ENCODE measurements at regions of chr13 and their contacts with region 1.

Region 1: DNA sequence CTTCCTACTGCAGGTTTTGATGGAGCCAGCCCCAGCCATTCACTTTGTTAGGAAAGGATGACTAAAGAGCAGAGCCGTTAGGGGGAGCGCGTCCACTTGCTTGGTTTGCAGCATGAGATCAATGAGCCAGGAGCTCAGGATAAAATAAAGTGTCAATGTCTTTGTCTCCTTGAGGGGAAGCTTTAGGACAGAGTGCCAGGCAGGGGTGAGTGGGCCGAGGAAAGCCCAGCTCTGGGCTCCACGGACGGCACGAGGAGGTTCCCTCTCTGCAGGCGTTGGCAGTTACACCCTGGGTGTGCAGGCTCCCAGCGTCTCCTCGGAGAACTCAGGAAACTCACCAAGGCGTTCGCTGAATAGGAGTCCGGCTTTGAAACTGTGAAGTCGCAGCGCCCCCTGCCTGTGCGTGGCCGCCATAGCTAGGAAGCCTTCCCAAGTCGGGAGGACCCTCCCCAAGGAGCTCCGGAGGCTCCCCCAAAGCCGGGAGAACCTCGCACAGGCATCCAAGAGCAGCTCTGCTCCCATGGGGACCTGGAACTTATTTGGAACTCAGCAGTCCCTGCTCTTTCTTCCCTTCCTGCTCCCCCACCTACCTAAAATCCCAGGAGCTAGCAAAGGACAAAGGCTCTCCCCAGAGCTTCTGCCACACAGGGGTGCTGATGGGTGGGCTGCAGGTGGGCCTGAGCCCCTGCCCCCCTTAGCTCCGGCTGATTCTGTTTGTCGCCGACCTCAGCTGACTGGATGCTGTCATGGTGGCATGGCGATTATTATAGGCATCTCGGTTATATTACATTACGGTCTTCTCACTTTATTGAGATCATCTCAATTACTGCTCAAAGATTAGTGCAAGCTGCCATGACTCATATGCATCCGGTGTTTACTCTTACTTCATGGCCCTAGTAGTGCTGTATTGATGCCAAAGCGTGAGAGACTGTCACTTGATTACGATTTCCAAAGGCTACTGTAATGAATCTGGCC is 34.4 kb downstream of the GSX1 start:
- DNase-seq: peak; percentile 78 to 99
- H3K4me3 ChIP-seq: peak overlapping the region in 3 of 4 experiments; percentile 31 to 52 (median 40); a peak in 4 of 8 replicates
- H3K27ac ChIP-seq: no peak overlapping the region
- H3K4me1 ChIP-seq: peaks cover 7 to 19% (median 11%) of the 10 kb centered on the region in 4 experiments; a peak in 6 of 7 replicates
- H3K27me3 ChIP-seq: peaks cover 47 to 91% (median 78%) of the 10 kb centered on the region in 4 experiments
- CTCF ChIP-seq: peak; percentile 77 to 96 (median 95)
- EP300 ChIP-seq: no peak
- POLR2A ChIP-seq: no peak
- RAD21 ChIP-seq: peak; percentile 94 to 96

Region 2: GRCh38 chr13:27379694-27380641 is 446.7 kb before region 1 on chr13:
- CTCF ChIA-PET with region 1: interaction called, 19 read pairs
- POLR2A ChIA-PET with region 1: no interaction called
- DNase-seq: peak; percentile 78 to 95
- H3K4me3 ChIP-seq: no peak overlapping the region; a peak in 1 of 8 replicates
- H3K27ac ChIP-seq: no peak overlapping the region
- H3K4me1 ChIP-seq: peaks cover 0 to 16% (median 10%) of the 10 kb centered on the region in 4 experiments; a peak in 6 of 7 replicates
- H3K27me3 ChIP-seq: no peaks in the 10 kb centered on the region
- CTCF ChIP-seq: peak; percentile 74 to 80 (median 79)
- EP300 ChIP-seq: no peak
- POLR2A ChIP-seq: no peak
- RAD21 ChIP-seq: peak; percentile 83 to 88

Region 3: DNA sequence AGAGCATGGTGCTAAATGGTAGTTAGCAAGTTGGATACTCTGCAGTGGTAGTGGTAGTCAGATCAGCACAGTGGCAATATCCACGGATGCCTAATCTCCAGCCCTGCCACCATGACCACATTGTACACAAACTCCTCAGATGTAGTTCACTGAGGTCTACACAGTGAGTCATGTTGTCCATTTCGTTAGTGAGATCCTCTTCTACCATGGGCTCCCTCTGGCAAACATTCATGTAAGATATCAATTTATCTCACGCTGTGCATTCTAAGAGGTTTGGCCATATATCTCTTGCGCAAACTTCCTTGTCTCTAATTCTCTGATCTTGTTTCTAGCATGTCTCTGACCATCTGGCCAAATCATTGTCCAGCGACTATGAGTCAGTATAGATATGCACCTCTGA is 146.8 kb before region 1 on chr13:
- CTCF ChIA-PET with region 1: interaction called, 10 read pairs
- POLR2A ChIA-PET with region 1: no interaction called
- DNase-seq: no peak
- H3K4me3 ChIP-seq: no peak overlapping the region
- H3K27ac ChIP-seq: no peak overlapping the region
- H3K4me1 ChIP-seq: no peaks in the 10 kb centered on the region
- H3K27me3 ChIP-seq: no peaks in the 10 kb centered on the region
- CTCF ChIP-seq: no peak
- EP300 ChIP-seq: no peak
- POLR2A ChIP-seq: no peak
- RAD21 ChIP-seq: no peak

Region 4: DNA sequence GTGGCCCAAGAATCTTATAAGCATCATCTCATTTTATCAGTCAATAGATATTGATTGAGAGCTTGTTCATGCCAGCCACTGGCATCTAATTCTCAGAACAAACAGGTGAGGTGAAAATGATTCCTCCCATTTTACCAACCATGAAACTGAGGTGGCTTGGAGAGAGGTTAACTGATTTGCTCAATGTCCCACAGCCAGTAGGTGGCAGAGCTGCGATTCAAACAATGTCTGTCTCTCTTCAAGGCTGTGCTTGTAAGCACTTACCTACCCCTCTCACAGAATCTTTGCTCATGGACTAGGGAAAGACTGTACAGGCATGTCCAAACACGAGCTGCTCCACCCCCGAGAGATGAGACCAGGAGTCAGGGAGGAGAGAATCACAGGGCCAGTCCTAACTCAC is 55.9 kb before region 1 on chr13:
- CTCF ChIA-PET with region 1: interaction called, 241 read pairs
- POLR2A ChIA-PET with region 1: interaction called, 3 read pairs
- DNase-seq: no peak
- H3K4me3 ChIP-seq: no peak overlapping the region
- H3K27ac ChIP-seq: no peak overlapping the region
- H3K4me1 ChIP-seq: no peaks in the 10 kb centered on the region
- H3K27me3 ChIP-seq: peaks cover 0 to 3% (median 0%) of the 10 kb centered on the region in 4 experiments; a peak in 3 of 7 replicates
- CTCF ChIP-seq: peak; percentile 35 to 89 (median 84)
- EP300 ChIP-seq: no peak
- POLR2A ChIP-seq: no peak
- RAD21 ChIP-seq: peak; percentile 79 to 83

Region 5: DNA sequence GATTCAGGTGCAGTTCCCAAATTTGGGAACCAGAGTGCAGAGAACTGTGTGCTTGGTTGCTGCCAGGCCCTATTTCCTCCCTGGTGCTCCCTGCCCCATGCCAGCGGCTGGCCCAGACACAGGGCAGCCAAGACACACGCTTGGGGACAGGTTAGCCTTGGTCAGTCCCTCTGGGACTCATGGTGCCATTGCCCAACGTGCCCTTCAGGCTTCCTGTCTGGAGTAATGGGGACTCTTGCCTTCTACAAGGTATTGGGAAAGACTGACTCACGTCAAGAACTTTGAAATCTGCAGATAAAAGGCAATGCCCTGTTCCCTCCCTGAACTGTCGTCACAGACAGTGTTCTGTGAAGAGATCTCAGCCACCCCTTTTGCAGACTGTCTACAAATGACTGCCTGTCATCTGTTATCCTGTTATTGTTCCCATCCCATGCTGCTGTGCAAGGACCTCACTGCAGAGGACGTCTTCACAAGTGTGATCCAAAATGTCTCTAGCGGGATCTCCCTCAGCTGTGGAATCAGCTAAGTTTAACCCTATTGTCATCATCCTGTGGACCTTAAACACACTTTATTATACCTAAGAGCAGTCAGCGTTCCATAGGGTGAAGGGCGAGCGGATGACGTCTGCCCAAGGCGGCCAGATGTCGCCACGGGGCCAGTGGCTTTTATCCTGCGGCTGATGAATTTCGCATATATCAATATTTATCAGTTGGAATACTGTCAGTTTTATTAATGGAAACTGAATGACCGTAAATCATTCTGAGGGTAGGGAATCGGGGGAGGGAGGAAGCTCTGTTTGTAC is 24.6 kb after region 1 on chr13:
- CTCF ChIA-PET with region 1: interaction called, 19 read pairs
- POLR2A ChIA-PET with region 1: no interaction called
- DNase-seq: no peak
- H3K4me3 ChIP-seq: no peak overlapping the region
- H3K27ac ChIP-seq: no peak overlapping the region
- H3K4me1 ChIP-seq: peaks cover 0 to 7% (median 3%) of the 10 kb centered on the region in 4 experiments; a peak in 4 of 7 replicates
- H3K27me3 ChIP-seq: peaks cover 0 to 6% (median 4%) of the 10 kb centered on the region in 4 experiments; a peak in 2 of 7 replicates
- CTCF ChIP-seq: no peak
- EP300 ChIP-seq: no peak
- POLR2A ChIP-seq: no peak
- RAD21 ChIP-seq: no peak

Region 6: DNA sequence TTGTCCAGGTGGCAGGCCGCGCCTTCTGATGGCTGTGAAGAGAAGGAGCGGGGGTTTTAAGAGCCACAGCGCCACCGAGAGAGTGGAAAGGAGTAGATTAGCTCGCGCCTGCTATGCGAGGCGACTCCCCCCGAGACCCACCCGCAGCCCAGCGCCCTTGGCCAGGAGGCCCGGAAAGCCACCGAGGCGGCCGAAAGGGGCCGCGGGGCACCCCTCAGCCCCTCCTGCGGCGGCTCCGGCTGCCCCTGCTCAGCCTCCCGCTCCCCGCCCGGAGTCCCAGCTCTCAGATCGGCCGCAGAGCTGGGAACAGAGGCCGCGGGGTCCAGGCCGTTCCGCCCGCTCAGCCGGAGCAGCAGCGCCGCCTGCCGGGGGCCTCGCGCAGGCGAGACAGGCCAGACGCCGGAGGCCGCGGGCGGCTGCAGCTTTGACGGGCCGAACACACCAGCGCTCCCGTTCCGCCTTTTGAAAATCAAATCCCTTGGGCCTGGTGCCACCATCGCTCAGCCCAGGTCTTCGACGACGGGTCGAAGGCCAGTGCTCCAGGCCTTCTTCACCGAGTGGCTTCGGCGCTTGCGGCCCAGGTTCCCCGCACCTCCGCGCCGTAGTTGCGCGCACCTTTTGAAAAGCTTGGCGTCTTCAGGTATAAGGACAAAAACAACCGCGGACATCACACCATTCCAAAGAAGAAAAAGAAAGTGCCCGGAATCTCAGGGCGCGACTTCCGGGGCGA is 127.2 kb after region 1 on chr13:
- CTCF ChIA-PET with region 1: interaction called, 150 read pairs
- POLR2A ChIA-PET with region 1: interaction called, 3 read pairs
- DNase-seq: peak in 1 of 2 experiments; percentile 95
- H3K4me3 ChIP-seq: peak overlapping the region; percentile 5 to 61 (median 42)
- H3K27ac ChIP-seq: no peak overlapping the region
- H3K4me1 ChIP-seq: peaks cover 0 to 5% (median 3%) of the 10 kb centered on the region in 4 experiments; a peak in 4 of 7 replicates
- H3K27me3 ChIP-seq: peaks cover 57 to 86% (median 73%) of the 10 kb centered on the region in 4 experiments
- CTCF ChIP-seq: peak; percentile 90 to 97 (median 93)
- EP300 ChIP-seq: 0 out of 3 replicates have a peak, but pooled peaks of 1 of the 2 experiments have one; percentile 64
- POLR2A ChIP-seq: no peak
- RAD21 ChIP-seq: peak; percentile 91 to 93

Region 7: DNA sequence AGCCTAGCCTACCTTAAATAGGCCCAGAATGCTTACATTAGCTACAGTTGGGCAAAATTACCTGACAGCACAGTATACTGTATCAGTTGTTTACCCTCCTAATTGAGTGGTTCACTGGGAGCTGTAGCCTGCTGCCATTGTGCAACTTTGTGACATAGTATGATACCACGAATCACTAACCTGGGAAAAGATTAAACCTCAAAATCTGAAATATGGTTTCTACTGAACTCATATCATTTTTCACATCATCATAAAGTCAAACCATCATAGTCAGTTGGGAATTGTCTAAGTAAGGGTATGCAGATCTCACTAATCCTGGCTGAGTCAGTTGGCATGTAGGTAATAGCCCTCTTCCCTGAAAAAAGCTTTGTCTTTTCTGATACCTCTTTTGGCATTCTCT is 320.8 kb after region 1 on chr13:
- CTCF ChIA-PET with region 1: no interaction called
- POLR2A ChIA-PET with region 1: no interaction called
- DNase-seq: no peak
- H3K4me3 ChIP-seq: no peak overlapping the region
- H3K27ac ChIP-seq: no peak overlapping the region
- H3K4me1 ChIP-seq: peaks cover 0 to 7% (median 0%) of the 10 kb centered on the region in 4 experiments; a peak in 1 of 7 replicates
- H3K27me3 ChIP-seq: no peaks in the 10 kb centered on the region
- CTCF ChIP-seq: no peak
- EP300 ChIP-seq: no peak
- POLR2A ChIP-seq: no peak
- RAD21 ChIP-seq: no peak

Measured in H1 (cell line).